OCI-LY7 (cell line): ENCODE measurements at regions of chr2 and their contacts with region 1.

Region 1: DNA sequence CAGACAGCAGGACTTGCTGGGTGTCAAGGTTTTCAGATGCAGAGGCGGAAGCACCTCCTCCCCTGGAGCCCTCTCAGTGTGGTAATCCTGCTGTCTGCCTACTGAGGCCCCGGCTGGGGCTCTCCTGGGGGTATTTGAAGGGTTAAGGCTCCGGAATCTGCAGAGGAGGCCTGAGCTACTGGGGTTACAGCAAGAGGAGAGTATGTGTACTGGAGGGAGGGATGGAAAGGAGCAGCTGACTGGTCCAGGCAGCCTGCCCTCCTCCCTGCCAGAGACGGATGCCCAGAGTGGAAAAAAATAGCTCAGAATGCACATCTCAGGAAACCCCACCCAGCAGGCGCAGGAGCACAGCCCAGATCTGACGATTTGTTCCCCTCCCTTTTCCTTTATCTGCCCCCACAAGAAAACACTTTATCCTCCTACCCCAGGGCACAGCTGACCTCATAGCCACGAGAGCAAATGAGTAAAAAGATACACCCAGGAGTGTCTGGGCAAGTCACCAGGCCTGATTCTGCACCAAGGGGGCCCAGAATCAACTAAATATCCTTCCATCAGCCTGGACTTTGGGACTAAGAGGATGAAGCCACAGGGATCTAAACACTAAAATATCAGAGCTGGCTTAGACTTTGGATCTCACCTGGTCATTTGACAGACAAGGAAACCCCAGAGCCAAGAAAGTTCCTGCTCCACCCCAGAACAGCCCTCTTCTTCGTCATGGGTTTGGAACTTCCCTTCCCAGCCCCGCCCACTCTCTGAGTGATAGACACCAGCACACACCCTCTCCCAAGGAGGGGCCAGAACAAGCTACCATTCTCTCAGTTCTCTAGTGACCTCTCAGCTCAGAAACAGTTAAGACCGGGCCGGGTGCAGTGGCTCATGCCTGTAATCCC is 5.5 kb downstream of the TMBIM1 start:
- DNase-seq: peak; percentile 78
- H3K4me3 ChIP-seq: peak overlapping the region; percentile 59
- H3K27ac ChIP-seq: peak overlapping the region; percentile 59
- H3K4me1 ChIP-seq: peaks cover 63% of the 10 kb centered on the region
- CTCF ChIP-seq: no peak

Region 2: DNA sequence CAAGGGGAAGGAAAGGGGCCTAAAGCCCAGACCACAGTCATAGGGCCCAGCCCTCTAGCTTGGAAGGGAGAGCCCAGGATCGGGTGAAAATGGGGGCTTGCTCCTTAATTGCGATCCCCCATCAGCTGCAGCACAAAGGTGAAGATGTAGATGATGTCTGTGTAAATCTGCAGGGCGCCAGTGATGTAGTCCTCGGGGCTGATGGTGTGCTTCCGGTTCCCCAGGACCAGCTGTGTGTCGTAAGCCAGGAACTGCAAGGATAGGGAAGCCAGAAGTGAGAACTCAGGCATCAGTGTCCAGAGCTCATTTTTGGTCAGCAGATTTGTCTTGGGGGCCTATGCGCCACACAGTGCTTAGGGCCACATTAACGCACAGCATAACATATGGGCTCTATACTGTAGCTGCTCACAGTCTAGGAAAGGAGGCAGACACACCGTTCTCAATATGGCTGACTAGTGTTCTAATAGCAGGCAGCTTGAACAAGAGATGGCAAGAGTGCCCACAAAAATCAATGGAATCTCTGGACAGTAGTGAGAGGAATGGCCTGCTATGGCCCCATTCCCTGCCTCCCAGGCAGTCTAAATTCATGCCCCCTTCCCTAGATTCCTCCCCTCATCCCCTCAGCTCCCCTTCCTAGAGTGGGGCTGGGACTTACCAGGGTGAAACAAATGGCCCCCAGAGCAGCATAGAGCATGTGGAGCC is 11.3 kb before region 1 on chr2:
- CTCF ChIA-PET with region 1: interaction called, 17 read pairs
- POLR2A ChIA-PET with region 1: interaction called, 35 read pairs
- intact Hi-C with region 1: loop called (anchors 1 kb)
- DNase-seq: no peak
- H3K4me3 ChIP-seq: no peak overlapping the region
- H3K27ac ChIP-seq: no peak overlapping the region
- H3K4me1 ChIP-seq: peaks cover 23% of the 10 kb centered on the region
- CTCF ChIP-seq: no peak

Region 3: GRCh38 chr2:218317232-218317630 is 30.4 kb after region 1 on chr2:
- CTCF ChIA-PET with region 1: no interaction called
- POLR2A ChIA-PET with region 1: no interaction called
- intact Hi-C with region 1: no loop called
- DNase-seq: no peak
- H3K4me3 ChIP-seq: no peak overlapping the region
- H3K27ac ChIP-seq: no peak overlapping the region
- H3K4me1 ChIP-seq: peaks cover 40% of the 10 kb centered on the region
- CTCF ChIP-seq: no peak